ENCODE measurements at regions of chr6 and their contacts with region 1.

Region 1: DNA sequence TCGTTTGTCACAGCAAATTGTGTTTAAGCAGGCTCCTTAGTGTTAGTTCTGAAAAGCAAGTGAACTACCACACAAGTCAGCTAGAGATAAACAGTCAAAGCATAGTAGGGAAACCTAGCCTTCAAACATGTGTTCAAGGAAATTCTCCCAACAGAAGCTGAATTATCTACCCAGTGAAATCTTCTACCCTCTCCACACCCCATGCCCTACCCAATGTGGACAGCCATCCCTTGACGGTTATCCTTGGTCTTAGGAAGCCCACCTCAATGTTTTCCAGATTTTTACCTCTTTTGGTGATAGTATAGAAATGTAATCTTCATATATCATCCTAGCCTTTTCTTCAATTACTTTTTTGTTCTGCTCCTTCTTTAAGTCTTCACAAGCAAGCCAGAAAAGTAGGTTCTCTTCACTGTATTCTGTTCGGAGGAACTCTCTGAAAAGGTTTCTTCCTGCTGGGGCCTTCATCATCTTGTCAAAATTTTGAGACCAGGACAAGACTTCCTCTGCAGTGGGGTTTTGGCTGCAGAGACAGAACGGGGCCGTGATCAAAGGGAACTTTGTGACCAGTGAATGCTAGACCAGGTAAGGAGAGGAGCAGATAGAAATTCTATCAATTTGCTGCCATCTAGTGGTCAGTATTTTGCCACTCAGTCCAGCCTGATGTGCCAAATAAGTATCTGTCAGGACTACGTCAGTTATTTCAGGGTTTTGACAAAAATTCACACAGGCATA is 21.6 kb upstream of the MTRF1L start:
- DNase-seq: peak in 8 of 9 donors; percentile 25 to 58 (median 48)
- ATAC-seq: peak; percentile 91
- H3K4me3 ChIP-seq: no peak overlapping the region
- H3K4me3 Mint-ChIP-seq: no peak overlapping the region
- H3K27ac ChIP-seq: no peak overlapping the region
- H3K27ac Mint-ChIP-seq: no peak overlapping the region
- H3K4me1 ChIP-seq: no peaks in the 10 kb centered on the region
- H3K4me1 Mint-ChIP-seq: peaks cover 0 to 6% (median 3%) of the 10 kb centered on the region in 7 donors
- H3K27me3 ChIP-seq: no peaks in the 10 kb centered on the region
- H3K27me3 Mint-ChIP-seq: peaks cover 17 to 41% (median 20%) of the 10 kb centered on the region in 5 donors

Region 2: GRCh38 chr6:151044465-151045441 is 1979.4 kb before region 1 on chr6:
- CTCF ChIA-PET with region 1: no interaction called
- POLR2A ChIA-PET with region 1: no interaction called
- intact Hi-C with region 1: no loop called
- DNase-seq: no peak
- ATAC-seq: no peak
- H3K4me3 ChIP-seq: no peak overlapping the region
- H3K4me3 Mint-ChIP-seq: no peak overlapping the region
- H3K27ac ChIP-seq: no peak overlapping the region
- H3K27ac Mint-ChIP-seq: peak overlapping the region in 1 of 9 donors; percentile 33
- H3K4me1 ChIP-seq: no peaks in the 10 kb centered on the region
- H3K4me1 Mint-ChIP-seq: no peaks in the 10 kb centered on the region
- H3K27me3 ChIP-seq: no peaks in the 10 kb centered on the region
- H3K27me3 Mint-ChIP-seq: no peaks in the 10 kb centered on the region

Region 3: DNA sequence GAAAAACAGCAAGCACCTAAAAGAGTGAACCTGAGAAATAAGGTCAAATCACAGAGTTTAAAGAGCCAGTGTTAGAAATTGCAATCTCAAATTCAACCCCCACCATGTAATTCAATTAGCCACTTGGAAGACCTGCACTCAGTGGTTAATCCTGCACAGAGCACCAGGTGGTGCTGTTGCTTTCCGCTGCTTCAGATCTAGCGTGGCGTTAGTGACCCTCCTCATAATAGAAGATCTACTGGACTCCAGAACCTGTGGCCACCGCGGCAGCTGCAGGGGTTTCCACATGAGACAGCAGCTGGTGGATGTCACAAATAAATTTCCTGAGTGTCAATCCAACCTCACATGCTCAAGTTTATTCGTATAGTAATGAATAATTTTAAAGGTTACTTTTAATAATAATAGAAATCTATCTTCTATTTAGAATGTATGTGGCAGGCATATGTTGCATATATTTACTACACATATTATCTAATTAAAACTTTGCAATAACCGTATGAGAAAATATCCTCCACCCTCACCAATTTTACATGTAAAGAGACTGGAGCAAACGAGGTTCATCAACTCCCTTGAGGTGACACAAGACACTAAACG is 471.4 kb before region 1 on chr6:
- CTCF ChIA-PET with region 1: no interaction called
- POLR2A ChIA-PET with region 1: no interaction called
- intact Hi-C with region 1: loop called in 1 of 2 experiments (anchors 5 kb)
- DNase-seq: peak in 2 of 9 donors; percentile 5 to 22
- ATAC-seq: peak; percentile 80
- H3K4me3 ChIP-seq: no peak overlapping the region
- H3K4me3 Mint-ChIP-seq: no peak overlapping the region
- H3K27ac ChIP-seq: no peak overlapping the region
- H3K27ac Mint-ChIP-seq: no peak overlapping the region
- H3K4me1 ChIP-seq: no peaks in the 10 kb centered on the region
- H3K4me1 Mint-ChIP-seq: no peaks in the 10 kb centered on the region
- H3K27me3 ChIP-seq: no peaks in the 10 kb centered on the region
- H3K27me3 Mint-ChIP-seq: peaks cover 0 to 17% (median 4%) of the 10 kb centered on the region in 5 donors

Region 4: GRCh38 chr6:152863618-152864326 is 160.4 kb before region 1 on chr6:
- CTCF ChIA-PET with region 1: interaction called, 5 read pairs
- POLR2A ChIA-PET with region 1: no interaction called
- intact Hi-C with region 1: loop called (anchors 1 kb)
- DNase-seq: peak; percentile 14 to 62 (median 49)
- ATAC-seq: peak; percentile 79
- H3K4me3 ChIP-seq: no peak overlapping the region
- H3K4me3 Mint-ChIP-seq: no peak overlapping the region
- H3K27ac ChIP-seq: no peak overlapping the region
- H3K27ac Mint-ChIP-seq: no peak overlapping the region
- H3K4me1 ChIP-seq: no peaks in the 10 kb centered on the region
- H3K4me1 Mint-ChIP-seq: no peaks in the 10 kb centered on the region
- H3K27me3 ChIP-seq: no peaks in the 10 kb centered on the region
- H3K27me3 Mint-ChIP-seq: peaks cover 7 to 26% (median 23%) of the 10 kb centered on the region in 5 donors

Region 5: GRCh38 chr6:152941746-152942145 is 82.4 kb before region 1 on chr6:
- CTCF ChIA-PET with region 1: no interaction called
- POLR2A ChIA-PET with region 1: no interaction called
- intact Hi-C with region 1: no loop called
- DNase-seq: no peak
- ATAC-seq: no peak
- H3K4me3 ChIP-seq: no peak overlapping the region
- H3K4me3 Mint-ChIP-seq: no peak overlapping the region
- H3K27ac ChIP-seq: no peak overlapping the region
- H3K27ac Mint-ChIP-seq: no peak overlapping the region
- H3K4me1 ChIP-seq: no peaks in the 10 kb centered on the region
- H3K4me1 Mint-ChIP-seq: no peaks in the 10 kb centered on the region
- H3K27me3 ChIP-seq: no peaks in the 10 kb centered on the region
- H3K27me3 Mint-ChIP-seq: peaks cover 17 to 29% (median 27%) of the 10 kb centered on the region in 5 donors

Region 6: GRCh38 chr6:152954443-152954842 is 69.7 kb before region 1 on chr6:
- CTCF ChIA-PET with region 1: interaction called, 4 read pairs
- POLR2A ChIA-PET with region 1: no interaction called
- intact Hi-C with region 1: loop called (anchors 1 kb)
- DNase-seq: no peak
- ATAC-seq: no peak
- H3K4me3 ChIP-seq: no peak overlapping the region
- H3K4me3 Mint-ChIP-seq: no peak overlapping the region
- H3K27ac ChIP-seq: no peak overlapping the region
- H3K27ac Mint-ChIP-seq: no peak overlapping the region
- H3K4me1 ChIP-seq: no peaks in the 10 kb centered on the region
- H3K4me1 Mint-ChIP-seq: peaks cover 0 to 4% (median 0%) of the 10 kb centered on the region in 7 donors
- H3K27me3 ChIP-seq: peaks cover 0 to 7% of the 10 kb centered on the region in 2 donors
- H3K27me3 Mint-ChIP-seq: peaks cover 11 to 33% (median 26%) of the 10 kb centered on the region in 5 donors

Region 7: DNA sequence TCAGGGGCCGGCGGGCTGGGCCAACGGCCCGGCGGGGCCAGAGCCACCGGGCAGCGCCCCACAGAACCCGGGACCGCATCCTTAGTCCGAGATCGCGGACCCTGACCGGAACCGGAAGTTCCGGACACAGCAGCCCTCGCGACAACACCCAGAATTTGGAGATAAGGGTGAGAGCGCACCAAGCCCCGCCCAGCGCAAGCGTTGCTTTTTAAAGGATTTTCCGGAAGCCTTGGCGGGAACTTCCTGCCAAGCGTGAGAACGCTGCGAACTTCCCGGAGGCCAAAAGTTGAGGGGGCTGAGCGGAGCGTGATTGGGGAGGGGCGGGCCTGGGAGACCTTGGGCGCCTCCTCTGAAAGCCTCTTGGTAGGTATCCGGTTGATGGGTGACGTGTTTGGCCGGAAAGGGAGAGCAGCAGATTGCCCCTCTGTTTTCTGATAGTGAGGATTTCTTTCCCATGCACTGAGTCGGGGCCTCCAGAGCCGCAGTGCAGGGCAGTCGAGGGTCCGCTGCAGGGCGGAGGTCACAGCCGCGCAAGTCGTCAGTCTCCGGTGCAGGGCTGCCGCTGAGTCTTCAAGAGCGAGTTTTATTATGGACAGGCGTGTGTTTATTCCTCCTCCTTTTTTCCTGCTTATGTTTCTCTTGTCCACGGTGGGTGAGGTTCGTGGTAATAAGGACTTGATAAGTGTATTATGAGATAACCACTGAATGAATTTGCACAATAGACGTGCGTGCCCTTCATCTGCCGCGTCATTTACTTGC is 21.4 kb before region 1 on chr6 and contains the start of gene MTRF1L:
- CTCF ChIA-PET with region 1: interaction called, 3 read pairs
- POLR2A ChIA-PET with region 1: no interaction called
- intact Hi-C with region 1: loop called in 1 of 2 experiments (anchors 1 kb)
- DNase-seq: peak; percentile 52 to 84 (median 70)
- ATAC-seq: peak; percentile 92
- H3K4me3 ChIP-seq: peak within 1 kb of the TSS; percentile 63
- H3K4me3 Mint-ChIP-seq: peak within 1 kb of the TSS; percentile 85 to 99 (median 96)
- H3K27ac ChIP-seq: peak within 1 kb of the TSS; percentile 73
- H3K27ac Mint-ChIP-seq: peak within 1 kb of the TSS; percentile 86 to 98 (median 93)
- H3K4me1 ChIP-seq: peaks cover 18% of the 10 kb centered on the region in 2 donors
- H3K4me1 Mint-ChIP-seq: peaks cover 24 to 59% (median 49%) of the 10 kb centered on the region in 7 donors
- H3K27me3 ChIP-seq: no peaks in the 10 kb centered on the region
- H3K27me3 Mint-ChIP-seq: peaks cover 0 to 18% (median 0%) of the 10 kb centered on the region in 5 donors
- total RNA-seq, gene MTRF1L: 8.9 to 18.1 (median 13.5) TPM